Mammary epithelial cell (primary cell): ENCODE measurements at regions of chr9 and their contacts with region 1.

Region 1: GRCh38 chr9:22469928-22470544 is 23.4 kb downstream of the DMRTA1 start:
- DNase-seq: peak; percentile 42
- H3K4me3 ChIP-seq: no peak overlapping the region
- H3K27ac ChIP-seq: no peak overlapping the region
- H3K4me1 ChIP-seq: no peaks in the 10 kb centered on the region
- H3K27me3 ChIP-seq: no peaks in the 10 kb centered on the region
- CTCF ChIP-seq: peak; percentile 76 to 82

Region 2: GRCh38 chr9:22401671-22402070 is 68.4 kb before region 1 on chr9:
- CTCF ChIA-PET with region 1: no interaction called
- dilution Hi-C with region 1: no loop called
- in situ Hi-C with region 1: no loop called
- intact Hi-C with region 1: no loop called
- DNase-seq: no peak
- H3K4me3 ChIP-seq: no peak overlapping the region
- H3K27ac ChIP-seq: no peak overlapping the region
- H3K4me1 ChIP-seq: no peaks in the 10 kb centered on the region
- H3K27me3 ChIP-seq: no peaks in the 10 kb centered on the region
- CTCF ChIP-seq: no peak

Region 3: GRCh38 chr9:22580788-22581187 is 110.8 kb after region 1 on chr9:
- CTCF ChIA-PET with region 1: no interaction called
- dilution Hi-C with region 1: no loop called
- in situ Hi-C with region 1: no loop called
- intact Hi-C with region 1: no loop called
- DNase-seq: no peak
- H3K4me3 ChIP-seq: no peak overlapping the region
- H3K27ac ChIP-seq: no peak overlapping the region
- H3K4me1 ChIP-seq: no peaks in the 10 kb centered on the region
- H3K27me3 ChIP-seq: no peaks in the 10 kb centered on the region
- CTCF ChIP-seq: no peak

Region 4: GRCh38 chr9:23322392-23322791 is 852.4 kb after region 1 on chr9:
- CTCF ChIA-PET with region 1: interaction called, 3 read pairs
- dilution Hi-C with region 1: no loop called
- in situ Hi-C with region 1: no loop called
- intact Hi-C with region 1: loop called (anchors 5 kb)
- DNase-seq: peak; percentile 2
- H3K4me3 ChIP-seq: no peak overlapping the region
- H3K27ac ChIP-seq: no peak overlapping the region
- H3K4me1 ChIP-seq: no peaks in the 10 kb centered on the region
- H3K27me3 ChIP-seq: no peaks in the 10 kb centered on the region
- CTCF ChIP-seq: peak; percentile 38 to 50

Region 5: DNA sequence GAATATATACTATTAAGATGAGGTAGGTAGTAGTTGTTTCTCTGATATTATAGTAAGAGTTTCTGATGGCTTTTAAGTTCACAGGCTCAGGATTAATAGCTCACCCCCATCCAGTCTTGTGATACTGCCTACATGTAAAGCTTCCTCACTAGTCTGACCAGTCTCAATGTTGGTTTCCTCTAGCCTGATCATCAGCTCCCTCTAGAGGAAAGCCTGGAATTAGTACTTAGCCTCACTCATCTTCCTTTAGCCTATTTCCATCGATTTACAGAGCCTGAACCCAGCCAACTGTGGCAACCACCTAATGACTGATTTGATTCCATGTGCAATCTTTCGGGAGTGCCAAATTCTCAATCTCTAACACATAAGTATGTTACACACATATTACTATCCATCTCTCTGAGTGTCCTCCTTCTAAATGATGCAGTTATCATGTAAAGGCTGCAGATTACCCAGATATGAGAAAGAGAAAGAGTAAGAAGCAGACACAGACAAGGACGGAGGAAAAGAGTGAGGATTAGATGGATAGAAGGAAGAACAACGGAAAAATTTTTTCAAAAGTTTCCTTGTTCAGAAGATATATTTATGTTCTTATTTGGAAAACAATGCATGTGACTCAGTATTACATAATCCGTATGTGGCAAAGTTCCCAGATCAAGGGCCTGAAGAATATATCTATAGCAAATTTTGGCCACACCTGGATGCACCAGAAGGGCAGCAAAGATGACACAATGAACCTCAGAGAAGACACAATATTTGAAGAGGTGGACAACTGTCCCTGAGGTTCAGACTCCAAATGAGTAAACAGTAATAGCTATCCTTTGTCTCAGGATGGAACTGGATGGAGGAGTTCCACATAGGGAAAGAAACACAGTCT is 1022.3 kb after region 1 on chr9:
- CTCF ChIA-PET with region 1: no interaction called
- dilution Hi-C with region 1: no loop called
- in situ Hi-C with region 1: no loop called
- intact Hi-C with region 1: loop called (anchors 1 kb)
- DNase-seq: peak; percentile 57
- H3K4me3 ChIP-seq: no peak overlapping the region
- H3K27ac ChIP-seq: no peak overlapping the region
- H3K4me1 ChIP-seq: peaks cover 9% of the 10 kb centered on the region
- H3K27me3 ChIP-seq: peaks cover 2% of the 10 kb centered on the region
- CTCF ChIP-seq: peak; percentile 68 to 78